ENCODE measurements at regions of chr21 and their contacts with region 1.

Region 1: GRCh38 chr21:25487046-25487594 is 120.2 kb downstream of the MRPL39 start:
- DNase-seq: no peak
- ATAC-seq: peak; percentile 75
- H3K4me3 Mint-ChIP-seq: peak overlapping the region; percentile 54
- H3K27ac Mint-ChIP-seq: peak overlapping the region; percentile 89
- H3K4me1 Mint-ChIP-seq: peaks cover 77% of the 10 kb centered on the region
- H3K27me3 Mint-ChIP-seq: no peaks in the 10 kb centered on the region
- CTCF ChIP-seq: no peak

Region 2: DNA sequence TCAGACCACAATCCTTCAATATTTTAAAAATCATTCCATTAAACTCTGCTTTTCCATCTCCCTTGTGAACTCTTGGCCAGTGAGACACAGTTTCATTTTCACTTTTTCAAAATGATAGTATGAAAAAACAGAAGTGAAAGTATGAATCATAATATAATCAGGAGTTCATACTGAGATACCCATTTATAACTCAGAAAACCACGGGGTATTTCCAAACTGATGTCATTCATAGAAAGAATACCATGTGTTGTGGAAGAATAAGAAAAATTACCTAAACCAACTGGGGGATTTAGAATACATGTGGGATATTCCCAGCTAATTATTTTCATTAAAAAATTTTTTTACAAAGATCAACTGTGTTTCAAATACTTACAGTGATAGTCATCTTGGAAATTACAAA is 29.7 kb before region 1 on chr21:
- CTCF ChIA-PET with region 1: interaction called, 3 read pairs
- POLR2A ChIA-PET with region 1: interaction called, 13 read pairs
- intact Hi-C with region 1: loop called (anchors 2 kb)
- DNase-seq: no peak
- ATAC-seq: peak; percentile 47
- H3K4me3 Mint-ChIP-seq: peak overlapping the region; percentile 69
- H3K27ac Mint-ChIP-seq: peak overlapping the region; percentile 92
- H3K4me1 Mint-ChIP-seq: peaks cover 83% of the 10 kb centered on the region
- H3K27me3 Mint-ChIP-seq: no peaks in the 10 kb centered on the region
- CTCF ChIP-seq: no peak

Region 3: DNA sequence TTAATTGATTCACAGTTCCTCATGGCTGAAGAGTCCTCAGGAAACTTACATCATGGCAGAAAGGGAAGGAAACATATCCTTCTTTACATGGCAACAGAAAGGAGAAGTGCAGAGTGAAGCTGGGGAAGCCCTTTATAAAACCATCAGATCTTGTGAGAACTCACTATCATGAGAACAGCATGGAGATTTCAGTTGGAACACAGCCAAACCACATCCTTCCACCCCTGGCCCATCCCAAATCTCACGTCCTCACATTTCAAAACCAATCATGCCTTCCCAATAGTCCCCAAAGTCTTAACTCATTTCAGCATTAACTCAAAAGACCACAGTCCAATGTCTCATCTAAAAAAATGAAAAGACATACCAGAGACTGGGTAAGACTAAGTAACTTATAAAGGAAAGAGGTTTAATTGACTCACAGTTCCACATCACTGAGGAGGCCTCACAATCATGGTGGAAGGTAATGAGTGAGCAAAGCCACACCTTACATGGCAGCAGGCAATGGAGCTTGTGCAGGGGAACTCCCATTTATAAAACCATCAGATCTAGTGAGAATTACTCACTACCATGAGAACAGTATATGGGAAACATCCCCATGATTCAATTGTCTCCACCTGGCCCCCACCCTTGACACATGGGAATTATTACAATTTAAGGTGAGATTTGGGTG is 15.0 kb after region 1 on chr21:
- CTCF ChIA-PET with region 1: interaction called, 19 read pairs
- POLR2A ChIA-PET with region 1: interaction called, 9 read pairs
- intact Hi-C with region 1: loop called (anchors 1 kb)
- DNase-seq: peak; percentile 79
- ATAC-seq: peak; percentile 92
- H3K4me3 Mint-ChIP-seq: peak overlapping the region; percentile 50
- H3K27ac Mint-ChIP-seq: peak overlapping the region; percentile 99
- H3K4me1 Mint-ChIP-seq: peaks cover 69% of the 10 kb centered on the region
- H3K27me3 Mint-ChIP-seq: no peaks in the 10 kb centered on the region
- CTCF ChIP-seq: no peak

Region 4: DNA sequence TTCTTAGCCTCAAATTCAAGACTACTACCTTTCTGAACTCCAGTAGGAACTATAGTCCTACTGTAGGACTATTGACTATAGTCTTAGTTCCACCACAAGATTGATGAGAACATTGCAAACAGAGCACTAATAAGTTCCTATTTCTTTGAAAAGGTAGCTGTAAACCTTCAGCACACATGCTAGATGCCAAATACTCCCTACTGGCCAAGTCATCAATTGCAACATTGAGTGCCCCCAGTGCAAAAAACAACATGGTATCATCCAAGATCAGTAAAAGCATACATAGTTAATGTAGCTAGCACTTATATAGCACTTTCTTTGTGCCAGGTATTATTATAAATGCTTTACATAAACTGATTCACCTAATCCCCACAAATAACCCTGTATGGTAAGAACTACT is 20.4 kb after region 1 on chr21:
- CTCF ChIA-PET with region 1: interaction called, 19 read pairs
- POLR2A ChIA-PET with region 1: interaction called, 9 read pairs
- intact Hi-C with region 1: loop called (anchors 1 kb)
- DNase-seq: peak; percentile 46
- ATAC-seq: peak; percentile 43
- H3K4me3 Mint-ChIP-seq: peak overlapping the region; percentile 50
- H3K27ac Mint-ChIP-seq: peak overlapping the region; percentile 55
- H3K4me1 Mint-ChIP-seq: peaks cover 63% of the 10 kb centered on the region
- H3K27me3 Mint-ChIP-seq: no peaks in the 10 kb centered on the region
- CTCF ChIP-seq: peak; percentile 28

Region 5: GRCh38 chr21:25518491-25518911 is 31.4 kb after region 1 on chr21:
- CTCF ChIA-PET with region 1: no interaction called
- POLR2A ChIA-PET with region 1: no interaction called
- intact Hi-C with region 1: no loop called
- DNase-seq: no peak
- ATAC-seq: no peak
- H3K4me3 Mint-ChIP-seq: no peak overlapping the region
- H3K27ac Mint-ChIP-seq: no peak overlapping the region
- H3K4me1 Mint-ChIP-seq: peaks cover 26% of the 10 kb centered on the region
- H3K27me3 Mint-ChIP-seq: no peaks in the 10 kb centered on the region
- CTCF ChIP-seq: no peak

Region 6: DNA sequence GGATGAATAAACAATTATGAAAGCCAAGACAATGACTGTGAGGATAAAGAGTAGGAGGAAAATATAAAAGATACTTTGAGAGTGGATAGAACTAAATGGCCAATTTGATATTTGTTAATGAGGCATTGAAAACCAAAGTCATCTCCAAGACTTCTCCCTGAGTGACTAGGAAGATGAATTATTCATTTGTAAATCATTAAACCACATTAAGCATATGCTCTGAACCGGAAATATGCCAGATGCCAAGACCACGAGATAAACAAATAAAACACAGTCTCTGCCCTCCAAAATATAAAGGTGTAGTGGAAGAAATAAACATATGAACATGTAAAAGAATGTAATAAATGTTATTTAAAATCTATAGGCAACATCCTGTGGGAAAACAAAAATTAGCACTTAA is 41.4 kb after region 1 on chr21:
- CTCF ChIA-PET with region 1: no interaction called
- POLR2A ChIA-PET with region 1: no interaction called
- intact Hi-C with region 1: no loop called
- DNase-seq: no peak
- ATAC-seq: no peak
- H3K4me3 Mint-ChIP-seq: no peak overlapping the region
- H3K27ac Mint-ChIP-seq: no peak overlapping the region
- H3K4me1 Mint-ChIP-seq: peaks cover 3% of the 10 kb centered on the region
- H3K27me3 Mint-ChIP-seq: no peaks in the 10 kb centered on the region
- CTCF ChIP-seq: no peak